ENCODE measurements at regions of chr11 and their contacts with region 1.

Region 1: GRCh38 chr11:75241036-75241905 is 697 bp downstream of the TPBGL start:
- DNase-seq: peak in 1 of 2 experiments; percentile 93
- H3K4me3 ChIP-seq: no peak overlapping the region
- H3K27ac ChIP-seq: no peak overlapping the region
- H3K4me1 ChIP-seq: no peaks in the 10 kb centered on the region
- H3K27me3 ChIP-seq: peaks cover 56% of the 10 kb centered on the region
- CTCF ChIP-seq: no peak

Region 2: GRCh38 chr11:75063732-75064314 is 177.4 kb before region 1 on chr11:
- CTCF ChIA-PET with region 1: interaction called, 16 read pairs
- POLR2A ChIA-PET with region 1: no interaction called
- intact Hi-C with region 1: no loop called
- DNase-seq: no peak
- H3K4me3 ChIP-seq: no peak overlapping the region
- H3K27ac ChIP-seq: no peak overlapping the region
- H3K4me1 ChIP-seq: no peaks in the 10 kb centered on the region
- H3K27me3 ChIP-seq: no peaks in the 10 kb centered on the region
- CTCF ChIP-seq: no peak